ENCODE measurements at regions of chr13 and their contacts with region 1.

Region 1: GRCh38 chr13:110412132-110412914 is 105.2 kb downstream of the COL4A2 start:
- DNase-seq: peak; percentile 92
- ATAC-seq: peak; percentile 87
- H3K4me3 ChIP-seq: no peak overlapping the region
- H3K27ac ChIP-seq: peak overlapping the region; percentile 88
- H3K4me1 ChIP-seq: peaks cover 32% of the 10 kb centered on the region
- H3K27me3 ChIP-seq: no peaks in the 10 kb centered on the region
- CTCF ChIP-seq: peak; percentile 87

Region 2: DNA sequence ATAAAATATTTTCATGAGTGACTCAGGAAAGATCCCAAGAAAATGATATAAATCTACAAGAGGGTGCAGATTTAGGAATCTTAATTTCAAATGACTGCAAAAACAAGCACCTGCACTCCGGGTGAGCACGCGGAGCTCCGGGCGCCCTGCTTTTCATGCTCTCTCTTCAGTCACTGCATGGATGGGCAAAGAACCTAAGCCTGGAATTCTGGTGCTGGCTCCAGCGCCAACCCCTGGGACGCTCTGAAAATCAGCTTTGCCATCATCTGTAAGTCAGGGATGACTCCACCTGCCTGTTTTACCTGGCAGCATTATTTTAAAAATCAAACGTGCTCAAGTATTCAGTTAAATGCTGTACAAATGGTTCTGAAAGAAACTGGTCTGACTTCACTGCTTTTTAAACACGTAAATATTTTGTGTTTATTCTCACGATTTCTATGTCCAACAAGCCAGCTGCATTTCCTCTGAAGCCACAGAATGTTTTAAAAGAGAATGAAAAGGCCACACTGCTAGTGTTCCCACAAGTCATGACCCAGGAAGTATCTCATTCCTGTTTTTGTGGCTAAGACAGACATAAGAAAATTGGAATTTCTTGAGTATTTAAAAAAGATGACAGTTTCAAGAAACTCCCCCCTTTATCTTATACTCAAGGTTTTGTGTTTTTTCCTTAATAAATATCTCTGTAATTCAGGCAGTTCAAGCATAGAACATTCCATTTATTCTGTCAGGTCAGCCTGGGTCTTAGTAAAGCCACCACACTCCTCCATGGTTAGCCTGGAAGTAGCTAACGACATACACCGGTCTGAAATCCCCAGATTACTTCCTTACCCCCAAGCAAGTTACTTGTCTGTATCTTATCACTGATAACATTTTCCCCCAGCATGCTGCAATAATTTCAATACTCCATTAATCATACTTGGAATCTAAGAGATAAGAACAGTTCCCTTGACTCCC is 186.4 kb before region 1 on chr13:
- CTCF ChIA-PET with region 1: no interaction called
- POLR2A ChIA-PET with region 1: no interaction called
- intact Hi-C with region 1: loop called (anchors 1 kb)
- DNase-seq: no peak
- ATAC-seq: no peak
- H3K4me3 ChIP-seq: no peak overlapping the region
- H3K27ac ChIP-seq: no peak overlapping the region
- H3K4me1 ChIP-seq: no peaks in the 10 kb centered on the region
- H3K27me3 ChIP-seq: no peaks in the 10 kb centered on the region
- CTCF ChIP-seq: no peak

Region 3: GRCh38 chr13:110250258-110250891 is 161.9 kb before region 1 on chr13:
- CTCF ChIA-PET with region 1: interaction called, 6 read pairs
- POLR2A ChIA-PET with region 1: no interaction called
- intact Hi-C with region 1: loop called (anchors 1 kb)
- DNase-seq: peak; percentile 11
- ATAC-seq: peak; percentile 38; the same call in 1 of the 2 replicates
- H3K4me3 ChIP-seq: no peak overlapping the region
- H3K27ac ChIP-seq: no peak overlapping the region
- H3K4me1 ChIP-seq: peaks cover 7% of the 10 kb centered on the region
- H3K27me3 ChIP-seq: no peaks in the 10 kb centered on the region
- CTCF ChIP-seq: no peak

Region 4: DNA sequence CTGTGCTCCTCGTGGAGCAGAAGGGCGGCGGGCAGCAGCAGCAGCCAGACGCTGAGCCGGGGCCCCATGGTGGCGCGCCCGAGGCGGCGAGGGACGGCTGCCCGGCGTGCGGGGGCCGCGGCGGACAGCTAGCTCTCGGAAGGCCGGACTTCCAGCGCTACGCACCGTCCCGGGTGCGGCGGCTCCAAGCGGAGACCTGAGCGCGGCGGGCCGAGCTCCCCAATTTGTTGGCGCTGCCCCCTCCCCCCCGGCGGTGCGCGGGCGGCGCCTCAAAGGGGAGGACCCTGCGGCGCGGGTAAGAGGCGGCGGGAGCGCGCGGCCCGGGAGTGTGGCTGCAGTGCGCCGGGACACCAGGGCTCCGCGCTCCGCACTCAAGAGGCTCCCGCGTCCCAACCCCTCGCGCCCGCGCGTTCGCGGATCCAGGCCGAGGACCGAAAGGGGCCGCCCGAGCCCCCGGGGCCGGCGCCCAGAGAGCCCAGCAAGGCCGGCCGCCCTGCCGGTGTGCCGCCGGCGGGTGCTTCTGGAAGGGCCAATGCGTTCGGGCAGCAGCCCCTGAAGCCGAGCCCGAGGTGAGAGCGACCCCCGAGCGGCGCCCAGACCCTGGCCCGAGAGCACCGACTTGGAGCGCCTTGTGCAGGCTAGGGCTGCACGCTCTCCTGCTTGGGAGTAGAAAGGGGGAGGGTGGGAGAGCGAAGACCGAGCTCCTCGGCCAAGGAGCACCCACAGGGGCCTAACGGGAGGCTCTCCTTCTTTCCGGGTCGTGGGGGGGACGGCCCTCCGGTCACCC is 105.2 kb before region 1 on chr13 and contains the starts of genes COL4A1 and COL4A2:
- CTCF ChIA-PET with region 1: interaction called, 4 read pairs
- POLR2A ChIA-PET with region 1: interaction called, 6 read pairs
- intact Hi-C with region 1: loop called (anchors 5 kb)
- DNase-seq: peak; percentile 65
- ATAC-seq: peak; percentile 48
- H3K4me3 ChIP-seq: peak within 1 kb of the TSS; percentile 72
- H3K27ac ChIP-seq: peak within 1 kb of the TSS; percentile 49
- H3K4me1 ChIP-seq: peaks cover 42% of the 10 kb centered on the region
- H3K27me3 ChIP-seq: no peaks in the 10 kb centered on the region
- CTCF ChIP-seq: no peak
- total RNA-seq, gene COL4A1: 35.7 and 48.7 TPM in 2 replicates
- total RNA-seq, gene COL4A2: 74.5 and 127 TPM in 2 replicates

Region 5: GRCh38 chr13:110347535-110348308 is 64.6 kb before region 1 on chr13:
- CTCF ChIA-PET with region 1: interaction called, 5 read pairs
- POLR2A ChIA-PET with region 1: interaction called, 3 read pairs
- intact Hi-C with region 1: loop called (anchors 1 kb)
- DNase-seq: peak; percentile 93
- ATAC-seq: peak; percentile 49
- H3K4me3 ChIP-seq: peak overlapping the region; percentile 39; the same call in 1 of the 2 replicates
- H3K27ac ChIP-seq: peak overlapping the region; percentile 92
- H3K4me1 ChIP-seq: peaks cover 70% of the 10 kb centered on the region
- H3K27me3 ChIP-seq: no peaks in the 10 kb centered on the region
- CTCF ChIP-seq: no peak

Region 6: GRCh38 chr13:110382229-110382628 is 30.1 kb before region 1 on chr13:
- CTCF ChIA-PET with region 1: interaction called, 6 read pairs
- POLR2A ChIA-PET with region 1: no interaction called
- intact Hi-C with region 1: loop called (anchors 2 kb)
- DNase-seq: peak; percentile 82
- ATAC-seq: peak; percentile 72
- H3K4me3 ChIP-seq: no peak overlapping the region
- H3K27ac ChIP-seq: peak overlapping the region; percentile 97
- H3K4me1 ChIP-seq: peaks cover 39% of the 10 kb centered on the region
- H3K27me3 ChIP-seq: no peaks in the 10 kb centered on the region
- CTCF ChIP-seq: no peak